ENCODE measurements at regions of chr10 and their contacts with region 1.

Region 1: GRCh38 chr10:7525314-7526016 is 114.6 kb upstream of the SFMBT2 start:
- DNase-seq: peak in 31 of 35 experiments; percentile 20 to 88 (median 50)
- ATAC-seq: peak; percentile 79 to 86 (median 84)
- H3K4me3 ChIP-seq: no peak overlapping the region
- H3K4me3 Mint-ChIP-seq: no peak overlapping the region
- H3K27ac ChIP-seq: no peak overlapping the region
- H3K27ac Mint-ChIP-seq: no peak overlapping the region
- H3K4me1 ChIP-seq: peaks cover 7 to 14% of the 10 kb centered on the region in 2 experiments
- H3K4me1 Mint-ChIP-seq: peaks cover 11 to 20% (median 18%) of the 10 kb centered on the region in 3 donors
- H3K27me3 ChIP-seq: peaks cover 0 to 14% of the 10 kb centered on the region in 2 experiments
- H3K27me3 Mint-ChIP-seq: no peaks in the 10 kb centered on the region

Region 2: DNA sequence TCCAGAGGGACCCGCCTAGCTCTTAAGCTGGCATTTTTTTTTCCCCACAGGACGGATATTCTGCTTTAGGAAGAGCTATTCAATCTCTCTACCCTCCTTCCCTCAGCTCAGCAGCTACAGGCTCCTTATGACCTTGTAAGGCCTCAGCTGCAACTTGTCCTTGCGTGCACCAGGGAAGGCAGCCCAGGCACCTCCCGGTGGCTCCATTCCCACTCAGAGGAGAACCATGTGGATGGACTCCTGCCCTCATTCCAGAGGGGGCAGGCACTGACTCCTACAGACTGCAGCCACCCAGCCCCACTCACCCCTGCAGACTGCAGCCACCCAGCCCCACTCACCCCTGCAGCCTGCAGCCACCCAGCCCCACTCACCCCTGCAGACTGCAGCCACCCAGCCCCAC is 67.6 kb after region 1 on chr10:
- CTCF ChIA-PET with region 1: no interaction called
- POLR2A ChIA-PET with region 1: no interaction called
- DNase-seq: no peak
- ATAC-seq: no peak
- H3K4me3 ChIP-seq: no peak overlapping the region
- H3K4me3 Mint-ChIP-seq: no peak overlapping the region
- H3K27ac ChIP-seq: no peak overlapping the region
- H3K27ac Mint-ChIP-seq: no peak overlapping the region
- H3K4me1 ChIP-seq: peaks cover 0 to 2% of the 10 kb centered on the region in 2 experiments
- H3K4me1 Mint-ChIP-seq: peaks cover 0 to 6% (median 3%) of the 10 kb centered on the region in 3 donors
- H3K27me3 ChIP-seq: peaks cover 0 to 16% of the 10 kb centered on the region in 2 experiments
- H3K27me3 Mint-ChIP-seq: peaks cover 0 to 3% of the 10 kb centered on the region in 2 donors

Region 3: GRCh38 chr10:7687228-7687907 is 161.9 kb after region 1 on chr10:
- CTCF ChIA-PET with region 1: interaction called, 17 to 68 read pairs
- POLR2A ChIA-PET with region 1: interaction called in 1 of 2 experiments, 4 read pairs
- DNase-seq: peak; percentile 51 to 87 (median 69)
- ATAC-seq: peak; percentile 91 to 95 (median 94)
- H3K4me3 ChIP-seq: no peak overlapping the region
- H3K4me3 Mint-ChIP-seq: no peak overlapping the region
- H3K27ac ChIP-seq: no peak overlapping the region
- H3K27ac Mint-ChIP-seq: no peak overlapping the region
- H3K4me1 ChIP-seq: no peaks in the 10 kb centered on the region
- H3K4me1 Mint-ChIP-seq: peaks cover 0 to 4% (median 2%) of the 10 kb centered on the region in 3 donors
- H3K27me3 ChIP-seq: peaks cover 0 to 4% of the 10 kb centered on the region in 2 experiments
- H3K27me3 Mint-ChIP-seq: peaks cover 0 to 4% of the 10 kb centered on the region in 2 donors

Region 4: GRCh38 chr10:9302120-9302746 is 1776.8 kb after region 1 on chr10:
- CTCF ChIA-PET with region 1: interaction called, 3 to 10 read pairs
- POLR2A ChIA-PET with region 1: no interaction called
- DNase-seq: peak in 10 of 35 experiments; percentile 3 to 69 (median 14)
- ATAC-seq: peak in 2 of 4 experiments; percentile 32 to 42
- H3K4me3 ChIP-seq: no peak overlapping the region
- H3K4me3 Mint-ChIP-seq: no peak overlapping the region
- H3K27ac ChIP-seq: no peak overlapping the region
- H3K27ac Mint-ChIP-seq: no peak overlapping the region
- H3K4me1 ChIP-seq: no peaks in the 10 kb centered on the region
- H3K4me1 Mint-ChIP-seq: no peaks in the 10 kb centered on the region
- H3K27me3 ChIP-seq: no peaks in the 10 kb centered on the region
- H3K27me3 Mint-ChIP-seq: peaks cover 8% of the 10 kb centered on the region in 2 donors

Measured in T-cell (primary cell).